Common myeloid progenitor, CD34-positive (primary cell): ENCODE measurements at regions of chr19 and their contacts with region 1.

Region 1: GRCh38 chr19:33819880-33820781 is 23.5 kb downstream of the KCTD15 start:
- DNase-seq: peak; percentile 85 to 93 (median 92)
- H3K4me3 ChIP-seq: peak overlapping the region; percentile 30 to 78 (median 56)
- H3K27ac ChIP-seq: peak overlapping the region in 1 of 2 experiments; percentile 61
- H3K4me1 ChIP-seq: peaks cover 3 to 54% (median 47%) of the 10 kb centered on the region in 4 experiments
- H3K27me3 ChIP-seq: no peaks in the 10 kb centered on the region

Region 2: GRCh38 chr19:33795370-33796163 is 24.6 kb before region 1 on chr19:
- CTCF ChIA-PET with region 1: interaction called, 13 read pairs
- POLR2A ChIA-PET with region 1: interaction called, 12 read pairs
- DNase-seq: peak; percentile 75 to 88 (median 87)
- H3K4me3 ChIP-seq: peak overlapping the region; percentile 60 to 89 (median 78)
- H3K27ac ChIP-seq: peak overlapping the region; percentile 64 to 85
- H3K4me1 ChIP-seq: peaks cover 0 to 27% (median 14%) of the 10 kb centered on the region in 4 experiments
- H3K27me3 ChIP-seq: no peaks in the 10 kb centered on the region

Region 3: GRCh38 chr19:33804021-33804799 is 15.9 kb before region 1 on chr19:
- CTCF ChIA-PET with region 1: interaction called, 11 read pairs
- POLR2A ChIA-PET with region 1: interaction called, 3 read pairs
- DNase-seq: no peak
- H3K4me3 ChIP-seq: no peak overlapping the region
- H3K27ac ChIP-seq: no peak overlapping the region
- H3K4me1 ChIP-seq: no peaks in the 10 kb centered on the region
- H3K27me3 ChIP-seq: no peaks in the 10 kb centered on the region